Lower leg skin (tissue), 4 donors: ENCODE measurements at regions of chr20 and their contacts with region 1.

Region 1: GRCh38 chr20:44683263-44684046 is 31.7 kb upstream of the CCN5 start:
- DNase-seq: no peak
- H3K4me3 ChIP-seq: no peak overlapping the region
- CTCF ChIP-seq: no peak
- POLR2A ChIP-seq: no peak

Region 2: DNA sequence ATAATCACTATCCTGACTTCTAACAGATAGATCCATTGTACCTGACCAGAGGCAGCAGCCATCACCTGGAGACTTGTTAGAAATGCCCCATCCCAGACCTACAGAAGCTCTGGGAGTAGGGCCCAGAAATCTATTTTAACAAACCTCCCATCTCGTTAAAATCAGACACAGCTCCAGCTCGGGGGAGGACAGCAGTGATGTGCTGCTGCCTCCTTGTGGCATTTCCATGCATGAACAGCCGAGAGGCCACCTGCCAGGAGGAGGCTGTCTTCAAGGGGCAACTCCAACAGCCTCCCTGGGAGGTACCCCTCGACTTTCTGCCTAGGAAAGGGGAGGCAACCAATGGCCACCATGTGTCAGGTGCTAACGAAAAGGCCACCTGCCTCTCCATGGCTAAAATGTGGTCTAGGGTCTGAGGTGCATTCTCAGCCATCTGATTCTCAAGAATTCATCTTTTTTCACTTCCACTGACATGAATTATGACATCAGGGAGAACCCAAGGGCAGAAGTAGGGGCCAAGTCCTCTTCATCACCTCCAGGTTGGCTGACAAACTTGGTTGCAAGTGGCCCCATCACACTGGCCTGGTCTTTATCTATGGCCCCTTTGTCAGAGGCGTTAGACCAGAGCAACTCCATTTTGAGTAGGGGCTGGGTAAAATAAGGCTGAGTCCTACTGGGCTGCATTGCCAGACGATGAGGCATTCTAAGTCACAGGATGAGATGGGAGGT is 50.0 kb after region 1 on chr20:
- intact Hi-C with region 1: loop called (anchors 2 kb)
- DNase-seq: peak; percentile 58 to 94
- H3K4me3 ChIP-seq: no peak overlapping the region
- CTCF ChIP-seq: peak in 1 of 3 donors; percentile 69
- POLR2A ChIP-seq: no peak

Region 3: GRCh38 chr20:44861531-44862006 is 178.1 kb after region 1 on chr20:
- intact Hi-C with region 1: loop called (anchors 10 kb)
- DNase-seq: peak in 1 of 2 donors; percentile 59
- H3K4me3 ChIP-seq: no peak overlapping the region
- CTCF ChIP-seq: no peak
- POLR2A ChIP-seq: no peak